CD4-positive, alpha-beta memory T cell (primary cell): ENCODE measurements at regions of chr1 and their contacts with region 1.

Region 1: GRCh38 chr1:75745276-75745675 is 20.8 kb downstream of the ACADM start:
- DNase-seq: no peak
- H3K4me3 ChIP-seq: no peak overlapping the region
- H3K4me3 Mint-ChIP-seq: no peak overlapping the region
- H3K27ac ChIP-seq: no peak overlapping the region
- H3K27ac Mint-ChIP-seq: peak overlapping the region in 1 of 7 donors; percentile 80
- H3K4me1 ChIP-seq: no peaks in the 10 kb centered on the region
- H3K4me1 Mint-ChIP-seq: no peaks in the 10 kb centered on the region
- H3K27me3 ChIP-seq: no peaks in the 10 kb centered on the region
- H3K27me3 Mint-ChIP-seq: no peaks in the 10 kb centered on the region

Region 2: GRCh38 chr1:75724472-75725022 is 20.7 kb before region 1 on chr1 and contains the start of gene ACADM:
- CTCF ChIA-PET with region 1: no interaction called
- POLR2A ChIA-PET with region 1: no interaction called
- intact Hi-C with region 1: loop called (anchors 2 kb)
- DNase-seq: peak; percentile 77 to 84 (median 79)
- H3K4me3 ChIP-seq: peak within 1 kb of the TSS; percentile 49 to 80
- H3K4me3 Mint-ChIP-seq: peak within 1 kb of the TSS; percentile 96 to 100 (median 99)
- H3K27ac ChIP-seq: peak within 1 kb of the TSS; percentile 73
- H3K27ac Mint-ChIP-seq: peak within 1 kb of the TSS; percentile 93 to 99 (median 97)
- H3K4me1 ChIP-seq: peaks cover 39% of the 10 kb centered on the region
- H3K4me1 Mint-ChIP-seq: peaks cover 22 to 49% (median 33%) of the 10 kb centered on the region in 4 donors
- H3K27me3 ChIP-seq: no peaks in the 10 kb centered on the region
- H3K27me3 Mint-ChIP-seq: no peaks in the 10 kb centered on the region
- total RNA-seq, gene ACADM: 31.9 to 33.4 TPM

Region 3: DNA sequence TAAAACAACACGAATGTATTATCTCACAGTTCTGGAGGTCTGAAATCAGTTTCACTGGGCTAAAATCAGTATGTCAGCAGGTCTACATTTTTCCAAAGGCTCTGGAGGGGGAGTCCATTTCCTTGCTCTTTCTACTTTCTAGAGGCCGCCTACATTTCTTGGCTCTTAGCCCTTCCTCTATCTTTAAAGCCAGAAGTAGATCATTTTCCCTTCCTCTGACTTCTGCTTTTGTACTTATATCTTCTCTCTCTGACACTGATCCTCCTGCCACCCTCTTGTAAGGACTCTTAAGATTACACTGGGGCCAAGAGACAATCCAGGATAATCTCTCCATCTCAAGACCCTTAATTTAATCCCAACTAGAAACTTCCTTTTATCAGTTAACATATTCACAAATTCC is 92.8 kb after region 1 on chr1:
- CTCF ChIA-PET with region 1: no interaction called
- POLR2A ChIA-PET with region 1: no interaction called
- intact Hi-C with region 1: no loop called
- DNase-seq: no peak
- H3K4me3 ChIP-seq: no peak overlapping the region
- H3K4me3 Mint-ChIP-seq: no peak overlapping the region
- H3K27ac ChIP-seq: no peak overlapping the region
- H3K27ac Mint-ChIP-seq: no peak overlapping the region
- H3K4me1 ChIP-seq: no peaks in the 10 kb centered on the region
- H3K4me1 Mint-ChIP-seq: no peaks in the 10 kb centered on the region
- H3K27me3 ChIP-seq: no peaks in the 10 kb centered on the region
- H3K27me3 Mint-ChIP-seq: peaks cover 3 to 9% of the 10 kb centered on the region in 2 donors